ENCODE measurements at regions of chr19 and their contacts with region 1.

Region 1: DNA sequence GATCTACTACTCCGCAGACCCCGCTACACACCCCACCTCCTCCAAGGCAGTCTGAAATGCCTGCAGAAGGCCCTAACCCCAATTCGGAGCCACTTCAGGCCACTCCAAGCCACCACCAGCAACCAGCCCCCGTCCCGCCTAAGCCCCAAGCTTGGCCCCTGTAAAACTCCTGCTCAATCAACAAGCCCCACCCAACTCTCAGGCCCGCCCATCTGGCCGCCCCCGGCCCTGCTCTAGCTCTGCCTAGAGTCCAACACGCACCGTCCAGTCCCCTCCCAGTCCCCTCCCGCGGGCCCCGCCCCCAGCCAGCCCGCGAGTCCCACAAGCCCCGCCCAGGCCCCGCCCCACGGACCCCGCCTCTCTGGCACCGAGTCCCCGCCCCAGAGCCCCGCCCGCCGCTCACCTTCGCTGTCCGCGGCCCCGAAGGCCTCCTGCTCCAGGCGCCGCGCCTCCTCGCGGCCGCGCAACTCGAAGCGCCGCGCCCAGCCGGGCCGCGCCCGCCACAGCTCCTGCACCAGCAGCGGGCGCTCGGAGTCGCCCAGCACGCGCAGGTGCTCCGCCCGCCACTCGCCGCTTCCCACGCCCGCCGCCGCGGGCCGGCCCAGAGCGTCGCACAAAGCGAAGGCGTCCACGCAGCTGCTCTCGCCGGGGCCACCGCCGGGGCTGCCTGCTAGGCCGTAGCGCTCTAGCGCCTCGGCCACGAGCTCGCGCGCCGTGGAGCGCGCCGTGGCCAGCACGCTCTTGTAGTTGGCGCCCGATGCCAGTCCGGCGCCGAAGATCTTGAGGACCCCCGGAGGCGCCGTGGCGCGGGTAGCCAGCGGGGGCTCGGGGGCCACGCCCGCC is 1.6 kb downstream of the RASIP1 start:
- DNase-seq: peak; percentile 75 to 96 (median 86)
- ATAC-seq: peak; percentile 90 to 93
- H3K4me3 Mint-ChIP-seq: peak overlapping the region; percentile 15 to 77 (median 64)
- H3K27ac Mint-ChIP-seq: peak overlapping the region in 5 of 10 donors; percentile 34 to 80 (median 75)
- H3K4me1 Mint-ChIP-seq: peaks cover 6 to 27% (median 21%) of the 10 kb centered on the region in 4 donors
- H3K27me3 Mint-ChIP-seq: peaks cover 0 to 8% (median 0%) of the 10 kb centered on the region in 5 donors

Region 2: GRCh38 chr19:48713864-48714758 is 24.7 kb before region 1 on chr19:
- POLR2A ChIA-PET with region 1: interaction called, 13 read pairs
- DNase-seq: peak; percentile 91 to 98 (median 96)
- ATAC-seq: peak; percentile 93 to 94
- H3K4me3 Mint-ChIP-seq: peak overlapping the region; percentile 77 to 96 (median 88)
- H3K27ac Mint-ChIP-seq: peak overlapping the region; percentile 53 to 90 (median 83)
- H3K4me1 Mint-ChIP-seq: peaks cover 10 to 28% (median 19%) of the 10 kb centered on the region in 4 donors
- H3K27me3 Mint-ChIP-seq: no peaks in the 10 kb centered on the region

Region 3: DNA sequence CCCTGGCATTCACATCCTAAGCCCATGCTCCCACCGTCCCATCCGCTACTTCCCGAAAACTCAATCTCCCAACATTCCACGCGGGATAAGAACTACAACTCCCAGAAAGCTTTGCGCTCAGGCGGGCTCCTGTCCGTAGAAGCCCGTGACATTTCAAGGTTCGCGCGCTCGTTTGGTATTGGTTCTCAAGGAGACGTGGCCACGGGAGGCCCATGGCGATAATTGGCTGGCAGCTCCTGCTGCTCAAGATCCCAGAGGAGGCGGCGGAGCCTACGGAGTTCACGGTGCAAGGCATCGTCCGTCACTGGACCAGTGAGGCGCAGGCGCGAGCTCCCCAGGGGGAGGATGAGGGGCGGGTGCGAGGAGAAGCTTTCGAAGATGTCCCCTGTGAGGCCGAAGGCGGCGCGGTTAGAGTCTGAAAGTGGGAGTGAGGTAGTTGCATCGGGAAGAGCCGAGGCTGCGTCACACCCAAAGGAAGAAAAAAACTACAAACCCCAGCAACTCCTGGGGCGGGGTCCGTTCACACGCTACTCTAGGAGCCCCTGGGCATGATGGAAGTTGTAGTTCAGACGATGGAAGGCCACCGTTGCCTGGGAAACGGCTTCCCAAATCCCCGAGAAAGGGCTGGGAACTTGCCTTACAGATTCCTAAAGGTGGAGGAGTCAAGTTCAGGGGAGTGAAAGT is 18.0 kb before region 1 on chr19:
- POLR2A ChIA-PET with region 1: interaction called, 15 read pairs
- DNase-seq: peak; percentile 77 to 96 (median 87)
- ATAC-seq: peak; percentile 82 to 92
- H3K4me3 Mint-ChIP-seq: peak overlapping the region; percentile 89 to 98 (median 96)
- H3K27ac Mint-ChIP-seq: peak overlapping the region; percentile 96 to 99 (median 98)
- H3K4me1 Mint-ChIP-seq: peaks cover 13 to 26% (median 25%) of the 10 kb centered on the region in 4 donors
- H3K27me3 Mint-ChIP-seq: no peaks in the 10 kb centered on the region

Measured in naive thymus-derived CD8-positive, alpha-beta T cell (primary cell).